Right ventricle myocardium inferior (tissue), 1 donor: ENCODE measurements at regions of chr12 and their contacts with region 1.

Region 1: DNA sequence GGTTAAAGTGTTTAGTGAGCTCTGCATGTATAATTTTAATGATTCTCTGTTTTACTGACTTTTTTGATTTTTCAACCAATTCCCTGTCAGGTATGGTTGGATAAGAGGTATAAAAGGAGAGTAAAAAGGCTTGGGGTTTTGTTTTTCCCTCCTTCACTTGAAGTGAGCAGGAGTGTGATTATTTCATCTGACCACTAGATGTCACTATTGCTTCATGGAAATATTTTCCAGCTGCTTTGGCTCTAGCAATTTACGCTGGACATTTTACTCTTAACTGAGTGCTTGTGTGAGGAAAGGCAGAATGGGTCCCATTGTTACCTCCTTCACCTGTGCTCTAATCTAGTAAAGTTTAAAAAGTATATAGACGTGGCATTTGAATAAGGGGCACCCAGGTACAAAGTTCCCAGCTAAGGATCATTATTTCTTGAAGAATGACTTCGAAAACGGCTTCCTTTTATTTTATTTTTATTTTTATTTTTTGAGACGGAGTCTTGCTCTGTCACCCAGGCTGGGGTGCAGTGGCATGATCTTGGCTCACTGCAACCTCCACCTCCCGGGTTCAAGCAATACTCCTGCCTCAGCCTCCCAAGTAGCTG is 66.5 kb downstream of the TBC1D30 start:
- DNase-seq: no peak
- ATAC-seq: peak; percentile 67

Region 2: GRCh38 chr12:65106948-65107347 is 216.0 kb after region 1 on chr12:
- intact Hi-C with region 1: loop called (anchors 5 kb)
- DNase-seq: no peak
- ATAC-seq: no peak

Region 3: DNA sequence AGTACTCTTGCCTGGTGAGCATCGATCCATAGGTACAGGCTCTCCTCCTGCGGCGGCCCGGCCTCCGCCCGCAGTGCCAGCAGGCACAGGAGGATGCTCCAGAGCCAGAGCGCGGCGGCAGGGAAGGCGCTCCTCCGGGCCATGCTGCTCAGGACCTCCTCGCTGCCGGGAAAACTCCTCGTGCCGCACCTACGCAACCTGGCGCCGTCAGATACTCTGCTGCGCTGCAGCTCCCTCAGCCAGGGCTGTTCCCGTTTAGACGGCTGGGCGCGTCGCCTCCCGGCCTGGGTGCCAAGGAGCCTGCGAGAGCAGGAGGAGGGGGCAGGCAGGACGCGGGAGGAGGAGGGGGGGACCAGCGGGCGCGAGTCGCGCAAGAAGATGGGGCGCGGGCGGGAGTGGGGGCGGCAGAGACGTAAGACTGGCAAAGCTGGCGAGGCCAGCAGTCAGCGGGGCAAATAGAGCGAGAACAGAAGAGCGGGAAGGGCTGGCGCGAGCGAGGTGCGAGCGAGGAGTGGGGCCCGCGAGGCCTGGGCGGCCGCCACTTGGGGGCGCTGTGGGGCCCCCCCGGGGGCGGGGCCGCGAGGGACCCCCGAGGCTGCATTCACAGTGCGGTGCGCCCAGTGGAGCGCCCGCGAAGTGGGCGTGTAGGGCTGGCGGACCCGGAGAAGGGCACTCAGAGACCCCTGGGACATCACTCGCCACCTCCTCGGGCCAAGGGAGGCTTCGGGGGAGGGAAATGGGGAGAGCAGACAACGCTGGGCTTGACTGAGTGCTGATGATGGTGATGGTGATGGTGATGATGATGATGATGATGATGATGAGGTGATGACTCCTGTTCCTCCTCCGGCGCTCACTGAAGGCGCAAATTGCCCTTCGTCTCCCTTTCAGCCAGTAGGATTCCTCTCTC is 230.3 kb after region 1 on chr12 and contains the start of gene WIF1:
- intact Hi-C with region 1: loop called (anchors 5 kb)
- DNase-seq: peak; percentile 72
- ATAC-seq: no peak
- total RNA-seq, gene WIF1: 0.62 TPM

Region 4: GRCh38 chr12:65232476-65233077 is 341.6 kb after region 1 on chr12:
- intact Hi-C with region 1: loop called (anchors 5 kb)
- DNase-seq: no peak
- ATAC-seq: no peak

Region 5: DNA sequence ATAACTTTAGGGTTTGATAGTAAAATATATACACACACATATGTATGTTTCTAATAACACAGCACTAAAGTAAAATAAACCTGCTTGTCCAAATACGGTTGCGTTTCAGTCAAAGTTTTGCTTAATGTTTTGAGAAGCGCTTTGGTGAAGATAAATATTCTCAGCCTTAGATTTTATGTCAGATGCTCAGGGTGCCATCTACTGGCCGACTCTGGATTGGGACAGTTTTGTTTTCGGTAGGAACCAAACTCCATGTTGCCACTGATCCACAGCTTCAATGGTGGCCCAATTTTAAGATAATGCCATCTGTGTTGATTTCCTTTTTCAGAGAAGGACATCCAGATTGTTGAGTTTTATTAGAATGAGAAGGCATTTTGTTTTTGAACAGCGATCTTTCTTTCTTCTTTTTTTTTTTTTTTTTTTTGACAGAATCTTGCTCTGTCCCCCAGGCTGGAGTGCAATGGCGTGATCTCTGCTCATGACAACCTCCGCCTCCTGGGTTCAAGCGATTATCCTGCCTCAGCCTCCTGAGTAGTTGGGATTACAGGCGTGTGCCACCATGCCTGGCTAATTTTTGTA is 1196.5 kb after region 1 on chr12:
- intact Hi-C with region 1: loop called (anchors 5 kb)
- DNase-seq: no peak
- ATAC-seq: peak; percentile 59

Region 6: DNA sequence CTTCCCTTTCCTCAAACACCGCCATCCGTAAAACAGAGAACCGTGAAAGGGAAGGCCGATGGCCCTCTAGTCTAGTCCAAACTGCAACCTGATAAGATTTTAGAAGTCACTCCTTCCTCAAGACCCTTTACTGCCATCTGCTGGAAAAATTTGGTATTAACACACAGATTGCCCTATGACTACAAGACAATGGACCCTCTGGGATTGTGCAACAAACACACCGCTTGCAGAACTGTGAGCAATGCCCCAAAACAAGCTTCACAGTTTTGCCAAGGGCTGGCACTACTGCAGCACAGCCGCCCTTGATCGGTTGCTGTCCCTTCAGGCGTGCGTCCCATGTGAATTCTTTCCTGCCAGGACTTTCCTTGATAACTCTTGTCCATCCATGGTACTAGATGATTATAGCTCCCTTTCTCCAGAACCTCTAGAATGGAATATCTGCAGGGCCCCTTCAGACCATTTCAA is 1216.5 kb after region 1 on chr12:
- intact Hi-C with region 1: loop called (anchors 5 kb)
- DNase-seq: no peak
- ATAC-seq: peak; percentile 72